ENCODE measurements at regions of chr17 and their contacts with region 1.

Region 1: GRCh38 chr17:75877752-75878173 is 618 bp downstream of the TRIM47 start:
- DNase-seq: peak; percentile 88
- ATAC-seq: peak; percentile 64
- H3K4me3 ChIP-seq: peak overlapping the region; percentile 71
- H3K27ac ChIP-seq: peak overlapping the region; percentile 92
- H3K4me1 ChIP-seq: peaks cover 24% of the 10 kb centered on the region
- H3K27me3 ChIP-seq: no peaks in the 10 kb centered on the region
- CTCF ChIP-seq: peak; percentile 40

Region 2: GRCh38 chr17:75557075-75557882 is 320.5 kb before region 1 on chr17:
- CTCF ChIA-PET with region 1: no interaction called
- POLR2A ChIA-PET with region 1: no interaction called
- intact Hi-C with region 1: no loop called
- DNase-seq: peak; percentile 78
- ATAC-seq: peak; percentile 51
- H3K4me3 ChIP-seq: no peak overlapping the region
- H3K27ac ChIP-seq: peak overlapping the region; percentile 11
- H3K4me1 ChIP-seq: peaks cover 30% of the 10 kb centered on the region
- H3K27me3 ChIP-seq: no peaks in the 10 kb centered on the region
- CTCF ChIP-seq: no peak

Region 3: GRCh38 chr17:75779231-75779986 is 98.4 kb before region 1 on chr17:
- CTCF ChIA-PET with region 1: interaction called, 9 read pairs
- POLR2A ChIA-PET with region 1: interaction called, 15 read pairs
- intact Hi-C with region 1: loop called (anchors 2 kb)
- DNase-seq: peak; percentile 100
- ATAC-seq: peak; percentile 54
- H3K4me3 ChIP-seq: peak overlapping the region; percentile 81
- H3K27ac ChIP-seq: peak overlapping the region; percentile 88
- H3K4me1 ChIP-seq: peaks cover 46% of the 10 kb centered on the region
- H3K27me3 ChIP-seq: no peaks in the 10 kb centered on the region
- CTCF ChIP-seq: no peak; the same call in 1 of the 2 replicates

Region 4: GRCh38 chr17:75845049-75845860 is 32.5 kb before region 1 on chr17:
- CTCF ChIA-PET with region 1: interaction called, 10 read pairs
- POLR2A ChIA-PET with region 1: no interaction called
- intact Hi-C with region 1: no loop called
- DNase-seq: peak; percentile 96
- ATAC-seq: peak; percentile 77
- H3K4me3 ChIP-seq: peak overlapping the region; percentile 49
- H3K27ac ChIP-seq: peak overlapping the region; percentile 96
- H3K4me1 ChIP-seq: peaks cover 39% of the 10 kb centered on the region
- H3K27me3 ChIP-seq: no peaks in the 10 kb centered on the region
- CTCF ChIP-seq: peak; percentile 89

Region 5: DNA sequence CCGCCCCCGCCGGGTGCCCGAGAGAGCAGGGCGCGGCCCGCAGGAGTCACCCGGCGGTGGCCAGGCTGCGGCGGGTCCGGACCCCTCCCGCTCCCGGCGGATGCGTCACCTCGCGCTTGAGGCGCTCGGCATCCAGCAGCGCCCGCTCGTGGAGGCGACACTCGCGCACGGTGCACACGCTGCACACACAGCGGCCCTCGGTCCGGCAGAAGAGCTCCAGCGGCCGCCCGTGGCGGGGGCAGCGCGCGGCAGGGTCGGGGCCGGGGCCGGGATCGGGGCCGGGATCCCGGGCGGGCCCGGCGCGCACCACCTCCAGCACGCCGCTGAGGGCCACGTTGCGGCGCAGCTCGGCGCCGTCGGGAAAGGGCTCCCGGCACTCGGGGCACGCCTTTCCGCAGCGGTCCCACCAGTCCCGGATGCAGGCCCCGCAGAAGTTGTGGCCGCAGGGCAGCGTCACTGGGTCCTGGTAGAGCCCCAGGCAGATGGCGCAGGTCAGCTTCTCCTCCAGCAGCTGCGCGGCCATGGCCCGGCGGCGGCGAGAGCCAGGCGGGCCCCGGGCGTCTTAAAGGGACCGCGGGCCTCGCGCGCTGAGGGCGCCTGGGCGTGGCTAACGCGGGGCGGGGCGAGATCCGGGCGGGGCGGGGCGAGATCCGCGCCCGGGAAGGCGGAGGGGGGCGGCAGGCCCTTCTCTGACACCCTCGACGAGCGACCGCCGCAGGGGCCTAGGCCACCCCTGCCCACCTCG is 18.8 kb after region 1 on chr17 and contains the start of gene TRIM65:
- CTCF ChIA-PET with region 1: interaction called, 8 read pairs
- POLR2A ChIA-PET with region 1: no interaction called
- intact Hi-C with region 1: loop called (anchors 1 kb)
- DNase-seq: peak; percentile 91
- ATAC-seq: peak; percentile 87
- H3K4me3 ChIP-seq: peak within 1 kb of the TSS; percentile 83
- H3K27ac ChIP-seq: peak within 1 kb of the TSS; percentile 74
- H3K4me1 ChIP-seq: peaks cover 14% of the 10 kb centered on the region
- H3K27me3 ChIP-seq: no peaks in the 10 kb centered on the region
- CTCF ChIP-seq: peak; percentile 40
- total RNA-seq, gene TRIM65: 32.3 and 48.9 TPM in 2 replicates

Region 6: DNA sequence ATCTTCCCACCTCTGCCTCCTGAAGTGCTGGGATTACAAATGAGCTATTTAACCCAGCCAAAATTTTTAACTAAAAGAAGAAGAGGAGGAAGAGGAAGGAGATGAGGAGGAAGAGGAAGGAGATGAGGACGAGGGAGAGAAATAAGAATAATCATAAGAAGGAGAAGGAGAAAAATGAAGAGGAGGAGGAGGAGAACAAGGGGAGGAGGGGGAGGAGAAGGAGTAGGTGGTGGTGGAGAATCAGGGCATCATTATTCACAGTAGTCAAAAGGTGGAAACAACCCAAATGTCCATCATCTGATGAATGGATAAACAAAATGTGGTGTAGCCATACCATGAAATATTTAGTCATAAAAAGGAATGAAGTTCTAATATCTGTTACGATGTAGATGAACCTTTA is 969.3 kb after region 1 on chr17:
- CTCF ChIA-PET with region 1: interaction called, 10 read pairs
- POLR2A ChIA-PET with region 1: no interaction called
- intact Hi-C with region 1: no loop called
- DNase-seq: no peak
- ATAC-seq: no peak
- H3K4me3 ChIP-seq: no peak overlapping the region
- H3K27ac ChIP-seq: no peak overlapping the region
- H3K4me1 ChIP-seq: no peaks in the 10 kb centered on the region
- H3K27me3 ChIP-seq: peaks cover 4% of the 10 kb centered on the region
- CTCF ChIP-seq: no peak

Measured in PC-3 (cell line).